ENCODE measurements at regions of chr5 and their contacts with region 1.

Region 1: GRCh38 chr5:10283927-10284635 is 23.6 kb downstream of the CMBL start:
- DNase-seq: peak; percentile 87
- ATAC-seq: peak; percentile 100
- H3K4me3 Mint-ChIP-seq: no peak overlapping the region
- H3K27ac Mint-ChIP-seq: peak overlapping the region; percentile 54
- H3K4me1 Mint-ChIP-seq: peaks cover 19% of the 10 kb centered on the region
- H3K27me3 Mint-ChIP-seq: no peaks in the 10 kb centered on the region

Region 2: DNA sequence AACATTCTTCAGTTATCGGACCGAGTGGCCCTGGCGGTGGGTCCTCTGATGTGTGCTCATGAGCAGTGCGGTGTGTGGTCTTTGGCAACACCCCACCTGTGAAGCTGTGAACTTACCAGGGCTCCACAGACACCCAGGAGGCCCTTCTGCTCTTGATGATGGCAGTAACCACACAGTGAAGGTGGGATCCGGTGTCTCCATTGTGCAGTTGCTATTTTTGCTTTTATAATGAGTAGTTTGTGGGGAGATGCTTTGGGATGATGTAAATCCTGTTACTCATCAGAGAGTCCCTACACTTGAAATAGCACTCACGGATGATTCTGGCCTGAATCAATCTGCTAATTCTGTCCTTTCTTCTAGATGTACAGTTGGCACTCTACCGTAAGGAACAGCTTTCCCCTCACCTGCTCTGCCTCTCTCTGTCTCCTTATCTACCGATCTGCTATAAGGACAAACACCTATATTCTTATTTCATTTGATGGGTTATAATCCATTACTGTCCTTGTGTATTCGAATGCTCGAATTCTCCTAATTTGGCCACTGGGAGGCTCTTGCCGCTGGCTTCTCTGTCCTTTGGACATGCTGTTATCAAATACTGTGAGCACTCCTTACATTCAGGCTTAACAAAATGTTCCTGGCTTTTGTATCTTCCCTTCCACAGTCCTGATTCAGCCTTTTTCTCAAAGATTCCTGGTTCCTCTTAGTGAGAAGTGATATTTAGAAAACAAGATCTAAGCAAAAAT is 54.6 kb before region 1 on chr5:
- CTCF ChIA-PET with region 1: no interaction called
- DNase-seq: no peak
- ATAC-seq: no peak
- H3K4me3 Mint-ChIP-seq: no peak overlapping the region
- H3K27ac Mint-ChIP-seq: no peak overlapping the region
- H3K4me1 Mint-ChIP-seq: no peaks in the 10 kb centered on the region
- H3K27me3 Mint-ChIP-seq: no peaks in the 10 kb centered on the region

Region 3: GRCh38 chr5:10295619-10296326 is 11.7 kb after region 1 on chr5:
- CTCF ChIA-PET with region 1: interaction called, 11 read pairs
- DNase-seq: no peak
- ATAC-seq: no peak
- H3K4me3 Mint-ChIP-seq: no peak overlapping the region
- H3K27ac Mint-ChIP-seq: no peak overlapping the region
- H3K4me1 Mint-ChIP-seq: peaks cover 3% of the 10 kb centered on the region
- H3K27me3 Mint-ChIP-seq: peaks cover 9% of the 10 kb centered on the region

Region 4: DNA sequence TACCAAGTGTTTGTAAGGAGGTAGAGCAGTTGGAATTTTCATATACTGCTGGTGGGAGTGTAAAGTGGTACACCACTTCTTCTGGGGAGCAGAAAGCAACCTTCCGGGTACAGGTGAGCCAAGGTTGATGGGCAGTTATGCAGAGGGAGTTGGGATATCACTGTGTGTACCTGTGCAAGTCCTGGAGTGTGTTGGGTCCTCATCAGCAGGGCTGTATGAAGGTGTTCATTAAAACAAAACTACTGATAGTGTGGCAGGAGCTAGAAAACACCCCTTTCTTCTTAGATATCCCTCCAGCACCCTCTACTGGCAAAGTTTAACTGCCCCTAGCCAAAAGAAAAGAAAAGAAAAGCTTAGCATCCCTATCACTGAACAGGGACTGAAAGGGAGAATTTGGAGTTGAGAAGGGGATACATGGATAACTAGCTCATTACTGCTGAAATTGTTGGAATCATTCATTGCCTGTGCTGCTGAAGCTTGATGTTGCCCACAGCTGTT is 80.2 kb after region 1 on chr5:
- CTCF ChIA-PET with region 1: interaction called, 14 read pairs
- DNase-seq: no peak
- ATAC-seq: peak; percentile 47
- H3K4me3 Mint-ChIP-seq: no peak overlapping the region
- H3K27ac Mint-ChIP-seq: no peak overlapping the region
- H3K4me1 Mint-ChIP-seq: peaks cover 20% of the 10 kb centered on the region
- H3K27me3 Mint-ChIP-seq: no peaks in the 10 kb centered on the region

Measured in activated CD8-positive, alpha-beta memory T cell treated with anti-CD3 and anti-CD28 coated beads, Interleukin-2, amount 10 ng/mL, durations not matched to agents 7 days and 5 days (primary cell).